CD14-positive monocyte (primary cell): ENCODE measurements at regions of chr4 and their contacts with region 1.

Region 1: GRCh38 chr4:6673660-6674499 is 19.8 kb upstream of the S100P start:
- DNase-seq: peak; percentile 94 to 97 (median 96)
- H3K4me3 ChIP-seq: peak overlapping the region; percentile 41 to 86 (median 84)
- H3K4me3 Mint-ChIP-seq: peak overlapping the region; percentile 90 to 95
- H3K27ac ChIP-seq: peak overlapping the region; percentile 50 to 89
- H3K27ac Mint-ChIP-seq: peak overlapping the region; percentile 81 to 95 (median 93)
- H3K4me1 ChIP-seq: peaks cover 34 to 37% of the 10 kb centered on the region in 2 donors
- H3K4me1 Mint-ChIP-seq: peaks cover 42% of the 10 kb centered on the region
- H3K27me3 ChIP-seq: no peaks in the 10 kb centered on the region
- H3K27me3 Mint-ChIP-seq: peaks cover 0 to 8% (median 0%) of the 10 kb centered on the region in 3 donors
- CTCF ChIP-seq: no peak

Region 2: DNA sequence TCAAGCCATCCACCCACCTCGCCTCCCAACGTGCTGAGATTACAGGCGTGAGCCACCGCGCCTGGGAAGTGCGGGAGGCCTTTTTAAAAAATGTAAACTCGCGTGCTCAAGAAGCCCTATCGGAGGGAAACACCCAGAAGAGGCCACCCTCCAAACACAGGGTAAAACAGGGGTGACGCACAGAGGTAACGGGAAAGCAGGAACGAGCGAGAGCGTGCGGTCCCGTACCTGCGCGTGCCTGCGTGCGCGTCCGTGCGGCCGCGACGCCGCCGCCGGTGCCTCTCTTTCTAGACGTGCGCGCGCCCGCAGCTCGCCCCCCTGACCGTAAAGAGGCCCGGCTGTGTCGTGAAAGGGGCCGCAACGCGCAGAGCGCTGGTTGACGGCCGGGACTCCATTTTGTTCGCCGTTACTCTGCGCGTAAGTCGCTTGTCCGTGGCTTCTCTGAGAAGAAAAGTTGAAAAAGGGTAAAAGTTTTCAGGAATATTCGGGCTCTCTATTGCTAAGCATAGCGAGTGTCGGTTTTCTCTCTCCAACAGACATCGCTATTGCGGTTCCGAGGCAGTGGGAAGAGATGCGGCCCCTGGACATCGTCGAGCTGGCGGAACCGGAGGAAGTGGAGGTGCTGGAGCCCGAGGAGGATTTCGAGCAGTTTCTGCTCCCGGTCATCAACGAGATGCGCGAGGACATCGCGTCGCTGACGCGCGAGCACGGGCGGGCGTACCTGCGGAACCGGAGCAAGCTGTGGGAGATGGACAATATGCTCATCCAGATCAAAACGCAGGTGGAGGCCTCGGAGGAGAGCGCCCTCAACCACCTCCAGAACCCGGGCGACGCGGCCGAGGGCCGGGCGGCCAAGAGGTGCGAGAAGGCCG is 33.4 kb before region 1 on chr4 and contains the start of gene MRFAP1:
- intact Hi-C with region 1: loop called (anchors 1 to 5 kb)
- DNase-seq: peak; percentile 90 to 94 (median 92)
- H3K4me3 ChIP-seq: peak within 1 kb of the TSS; percentile 89 to 97 (median 89)
- H3K4me3 Mint-ChIP-seq: peak within 1 kb of the TSS; percentile 99 to 100
- H3K27ac ChIP-seq: peak within 1 kb of the TSS; percentile 96 to 99
- H3K27ac Mint-ChIP-seq: peak within 1 kb of the TSS; percentile 96 to 100 (median 99)
- H3K4me1 ChIP-seq: peaks cover 20 to 29% of the 10 kb centered on the region in 2 donors
- H3K4me1 Mint-ChIP-seq: peaks cover 24% of the 10 kb centered on the region
- H3K27me3 ChIP-seq: no peaks in the 10 kb centered on the region
- H3K27me3 Mint-ChIP-seq: peaks cover 0 to 2% (median 0%) of the 10 kb centered on the region in 3 donors
- CTCF ChIP-seq: no peak
- polyA plus RNA-seq, gene MRFAP1: 72.1 to 180 (median 171) TPM

Region 3: DNA sequence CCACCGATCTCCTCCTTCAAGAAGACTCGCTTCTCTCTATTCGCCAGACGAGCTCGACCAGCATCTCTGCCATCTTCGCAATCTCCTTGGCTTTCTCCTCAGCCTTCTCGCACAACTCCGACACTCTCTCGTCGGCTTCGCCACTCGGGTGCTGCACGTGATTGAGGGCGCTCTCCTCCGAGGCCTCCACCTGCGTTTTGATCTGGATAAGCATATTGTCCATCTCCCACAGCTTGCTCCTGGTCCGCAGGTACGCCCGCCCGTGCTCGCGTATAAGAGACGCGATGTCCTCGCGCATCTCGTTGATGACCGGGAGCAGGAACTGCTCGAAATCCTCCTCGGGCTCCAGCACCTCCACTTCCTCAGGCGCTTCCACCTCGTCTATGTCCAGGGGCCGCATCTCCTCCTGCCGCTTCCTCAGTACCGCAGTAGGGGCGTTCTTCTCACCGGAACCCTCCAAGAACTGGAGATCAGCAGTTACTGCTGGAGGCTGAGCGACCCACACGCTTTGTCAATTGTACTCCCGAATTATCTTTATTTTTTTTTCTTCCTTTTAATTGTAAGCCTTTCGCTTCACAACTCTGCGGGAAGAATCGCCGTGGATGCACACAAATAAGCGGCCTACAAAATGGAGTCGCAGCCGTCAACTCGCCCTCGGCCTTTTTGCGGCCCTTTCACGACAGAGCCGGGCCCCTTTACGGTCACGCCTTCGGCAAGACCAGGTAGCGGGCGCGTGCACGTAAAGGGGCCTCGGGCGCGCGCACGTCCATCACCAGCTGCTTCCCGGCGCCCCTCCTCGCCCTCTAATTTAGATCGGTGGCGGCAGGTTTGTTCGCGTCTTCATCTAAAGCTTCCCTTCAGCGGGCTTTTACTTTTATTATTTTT is 35.6 kb after region 1 on chr4 and contains the start of gene MRFAP1L1:
- intact Hi-C with region 1: loop called (anchors 1 to 2 kb)
- DNase-seq: peak; percentile 93 to 95 (median 95)
- H3K4me3 ChIP-seq: peak within 1 kb of the TSS; percentile 75 to 85 (median 82)
- H3K4me3 Mint-ChIP-seq: peak within 1 kb of the TSS; percentile 99 to 100
- H3K27ac ChIP-seq: peak within 1 kb of the TSS; percentile 89 to 91
- H3K27ac Mint-ChIP-seq: peak within 1 kb of the TSS; percentile 96 to 99 (median 98)
- H3K4me1 ChIP-seq: peaks cover 36 to 41% of the 10 kb centered on the region in 2 donors
- H3K4me1 Mint-ChIP-seq: peaks cover 48% of the 10 kb centered on the region
- H3K27me3 ChIP-seq: no peaks in the 10 kb centered on the region
- H3K27me3 Mint-ChIP-seq: peaks cover 0 to 4% (median 2%) of the 10 kb centered on the region in 3 donors
- CTCF ChIP-seq: no peak
- polyA plus RNA-seq, gene MRFAP1L1: 7.6 to 19.1 (median 13.8) TPM